ENCODE measurements at regions of chr4 and their contacts with region 1.

Region 1: DNA sequence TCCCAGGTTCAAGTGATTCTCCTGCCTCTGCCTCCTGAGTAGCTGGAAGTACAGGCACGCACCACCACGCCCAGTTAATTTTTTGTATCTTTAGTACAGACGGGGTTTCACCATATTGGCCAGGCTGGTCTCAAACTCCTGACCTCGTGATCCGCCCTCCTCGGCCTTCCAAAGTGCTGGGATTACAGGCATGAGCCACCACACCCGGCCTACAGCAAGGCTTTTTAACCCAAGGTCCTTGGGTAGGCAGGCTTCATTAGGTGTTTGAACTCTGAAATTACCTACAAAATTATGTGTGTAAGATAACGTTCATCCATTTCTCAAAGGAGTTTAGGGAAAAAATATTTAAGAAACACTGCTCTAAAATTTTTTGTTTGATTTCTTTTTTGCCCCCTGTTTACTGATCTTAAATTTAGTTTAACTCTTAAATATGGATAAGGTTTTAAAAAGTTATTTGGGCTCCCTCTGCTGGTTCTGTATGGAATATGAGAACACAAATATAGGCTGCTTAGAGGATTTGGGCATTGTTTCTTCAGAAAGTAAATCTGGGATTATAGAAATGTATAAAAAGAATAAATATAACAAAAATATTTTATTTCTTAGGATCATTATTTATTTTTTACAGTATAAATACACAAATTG is 92.8 kb downstream of the CBR4 start:
- DNase-seq: no peak
- H3K4me3 ChIP-seq: no peak overlapping the region
- H3K27ac ChIP-seq: peak overlapping the region; percentile 30 to 76 (median 64)
- H3K4me1 ChIP-seq: peaks cover 0 to 43% (median 38%) of the 10 kb centered on the region in 4 donors
- H3K27me3 ChIP-seq: no peaks in the 10 kb centered on the region
- CTCF ChIP-seq: peak; percentile 40 to 51 (median 44)
- EP300 ChIP-seq: no peak
- POLR2A ChIP-seq: no peak

Region 2: GRCh38 chr4:167955006-167955405 is 962.3 kb before region 1 on chr4:
- intact Hi-C with region 1: no loop called
- DNase-seq: no peak
- H3K4me3 ChIP-seq: no peak overlapping the region
- H3K27ac ChIP-seq: no peak overlapping the region
- H3K4me1 ChIP-seq: peaks cover 0 to 10% (median 2%) of the 10 kb centered on the region in 4 donors
- H3K27me3 ChIP-seq: no peaks in the 10 kb centered on the region
- CTCF ChIP-seq: no peak
- EP300 ChIP-seq: no peak
- POLR2A ChIP-seq: no peak

Region 3: DNA sequence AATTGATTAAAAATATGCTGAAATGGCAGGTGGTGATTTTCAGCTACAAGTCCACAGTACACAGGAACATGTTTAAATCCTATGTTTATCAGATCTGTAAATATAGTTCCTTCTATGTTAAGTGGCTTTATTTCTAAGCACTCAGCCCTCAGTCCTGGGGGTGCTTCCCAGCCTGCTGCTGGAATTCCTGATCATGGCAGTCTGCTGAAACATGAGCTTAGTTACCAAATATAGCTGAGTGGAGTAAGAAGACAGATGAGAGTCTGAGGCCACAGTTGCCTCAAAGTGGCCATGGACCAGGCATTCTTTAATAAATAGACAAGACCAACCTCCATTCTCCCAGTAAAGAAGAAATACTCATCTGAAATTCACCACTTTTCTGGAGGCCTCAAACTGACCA is 581.6 kb before region 1 on chr4:
- intact Hi-C with region 1: no loop called
- DNase-seq: no peak
- H3K4me3 ChIP-seq: no peak overlapping the region
- H3K27ac ChIP-seq: no peak overlapping the region
- H3K4me1 ChIP-seq: no peaks in the 10 kb centered on the region
- H3K27me3 ChIP-seq: no peaks in the 10 kb centered on the region
- CTCF ChIP-seq: no peak
- EP300 ChIP-seq: no peak
- POLR2A ChIP-seq: no peak

Region 4: GRCh38 chr4:168815379-168816345 is 101.6 kb before region 1 on chr4:
- intact Hi-C with region 1: loop called (anchors 5 kb)
- DNase-seq: peak; percentile 70
- H3K4me3 ChIP-seq: peak overlapping the region in 3 of 4 donors; percentile 17 to 30 (median 28)
- H3K27ac ChIP-seq: peak overlapping the region; percentile 83 to 94 (median 86)
- H3K4me1 ChIP-seq: peaks cover 0 to 84% (median 65%) of the 10 kb centered on the region in 4 donors
- H3K27me3 ChIP-seq: no peaks in the 10 kb centered on the region
- CTCF ChIP-seq: no peak
- EP300 ChIP-seq: peak; percentile 74 to 97 (median 92)
- POLR2A ChIP-seq: no peak